ENCODE measurements at regions of chr15 and their contacts with region 1.

Region 1: GRCh38 chr15:89358755-89359439 is 24.3 kb upstream of the POLG start:
- DNase-seq: peak; percentile 94
- H3K4me3 ChIP-seq: peak overlapping the region; percentile 54 to 81
- H3K27ac ChIP-seq: peak overlapping the region in 1 of 2 experiments; percentile 77; a peak in 1 of 4 replicates
- H3K4me1 ChIP-seq: peaks cover 0 to 35% of the 10 kb centered on the region in 2 experiments; a peak in 2 of 4 replicates
- H3K27me3 ChIP-seq: peaks cover 39% of the 10 kb centered on the region; the same call in 1 of the 2 replicates
- CTCF ChIP-seq: peak; percentile 92
- EP300 ChIP-seq: no peak
- RAD21 ChIP-seq: peak; percentile 87

Region 2: GRCh38 chr15:89206908-89207331 is 152.0 kb before region 1 on chr15:
- CTCF ChIA-PET with region 1: interaction called, 13 read pairs
- POLR2A ChIA-PET with region 1: no interaction called
- DNase-seq: peak; percentile 93
- H3K4me3 ChIP-seq: peak overlapping the region; percentile 32 to 36; a peak in 3 of 4 replicates
- H3K27ac ChIP-seq: no peak overlapping the region
- H3K4me1 ChIP-seq: no peaks in the 10 kb centered on the region; a peak in 1 of 4 replicates
- H3K27me3 ChIP-seq: no peaks in the 10 kb centered on the region
- CTCF ChIP-seq: peak; percentile 96
- EP300 ChIP-seq: no peak
- RAD21 ChIP-seq: peak; percentile 85

Region 3: GRCh38 chr15:89329329-89330084 is 29.4 kb before region 1 on chr15:
- CTCF ChIA-PET with region 1: interaction called, 95 read pairs
- POLR2A ChIA-PET with region 1: interaction called, 6 read pairs
- DNase-seq: no peak
- H3K4me3 ChIP-seq: no peak overlapping the region
- H3K27ac ChIP-seq: peak overlapping the region in 1 of 2 experiments; percentile 11; a peak in 1 of 4 replicates
- H3K4me1 ChIP-seq: peaks cover 18 to 44% of the 10 kb centered on the region in 2 experiments
- H3K27me3 ChIP-seq: no peaks in the 10 kb centered on the region
- CTCF ChIP-seq: no peak
- EP300 ChIP-seq: no peak
- RAD21 ChIP-seq: no peak

Region 4: DNA sequence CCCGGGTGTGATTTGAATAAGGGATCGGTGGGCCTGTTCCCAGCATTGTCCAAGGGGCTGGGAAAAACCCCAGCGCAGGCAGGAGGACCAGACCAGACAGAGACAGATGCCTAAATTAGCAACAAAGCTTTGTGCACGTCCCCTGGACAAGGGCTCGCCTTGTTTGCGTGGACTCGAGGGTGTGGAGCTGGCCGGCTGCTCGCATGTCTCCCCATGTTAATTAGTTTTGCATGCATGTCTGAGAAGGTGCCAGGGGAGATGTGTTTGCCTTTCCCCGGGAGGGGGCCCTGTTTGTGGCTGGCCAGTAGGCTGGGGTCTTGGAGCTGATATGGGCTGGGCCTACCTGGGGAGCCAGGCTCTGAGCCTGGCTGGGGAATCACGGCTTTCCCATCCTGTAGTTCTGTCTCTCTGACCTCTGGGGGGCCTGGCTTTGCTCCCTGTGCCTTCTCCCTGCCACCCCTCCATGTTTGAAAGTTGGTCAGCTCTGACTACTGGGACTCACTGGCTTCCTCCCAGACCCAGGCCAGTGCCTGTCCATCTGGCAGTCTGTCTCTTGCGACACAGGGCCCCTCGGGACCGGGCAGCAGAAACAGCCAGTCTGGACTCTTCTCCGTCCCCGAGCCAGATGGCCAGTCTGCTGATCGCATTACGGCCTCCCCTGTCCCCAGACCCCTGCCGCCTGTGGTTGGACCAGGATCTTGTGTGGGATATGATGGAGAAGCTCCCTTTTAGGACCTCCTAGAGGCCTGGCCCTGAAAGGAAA is 31.1 kb after region 1 on chr15:
- CTCF ChIA-PET with region 1: interaction called, 766 read pairs
- POLR2A ChIA-PET with region 1: interaction called, 19 read pairs
- DNase-seq: peak; percentile 83
- H3K4me3 ChIP-seq: no peak overlapping the region
- H3K27ac ChIP-seq: peak overlapping the region in 1 of 2 experiments; percentile 98; a peak in 2 of 4 replicates
- H3K4me1 ChIP-seq: peaks cover 0 to 61% of the 10 kb centered on the region in 2 experiments; a peak in 2 of 4 replicates
- H3K27me3 ChIP-seq: no peaks in the 10 kb centered on the region
- CTCF ChIP-seq: no peak
- EP300 ChIP-seq: peak in 1 of 2 experiments; percentile 40; a peak in 2 of 4 replicates
- RAD21 ChIP-seq: no peak

Region 5: DNA sequence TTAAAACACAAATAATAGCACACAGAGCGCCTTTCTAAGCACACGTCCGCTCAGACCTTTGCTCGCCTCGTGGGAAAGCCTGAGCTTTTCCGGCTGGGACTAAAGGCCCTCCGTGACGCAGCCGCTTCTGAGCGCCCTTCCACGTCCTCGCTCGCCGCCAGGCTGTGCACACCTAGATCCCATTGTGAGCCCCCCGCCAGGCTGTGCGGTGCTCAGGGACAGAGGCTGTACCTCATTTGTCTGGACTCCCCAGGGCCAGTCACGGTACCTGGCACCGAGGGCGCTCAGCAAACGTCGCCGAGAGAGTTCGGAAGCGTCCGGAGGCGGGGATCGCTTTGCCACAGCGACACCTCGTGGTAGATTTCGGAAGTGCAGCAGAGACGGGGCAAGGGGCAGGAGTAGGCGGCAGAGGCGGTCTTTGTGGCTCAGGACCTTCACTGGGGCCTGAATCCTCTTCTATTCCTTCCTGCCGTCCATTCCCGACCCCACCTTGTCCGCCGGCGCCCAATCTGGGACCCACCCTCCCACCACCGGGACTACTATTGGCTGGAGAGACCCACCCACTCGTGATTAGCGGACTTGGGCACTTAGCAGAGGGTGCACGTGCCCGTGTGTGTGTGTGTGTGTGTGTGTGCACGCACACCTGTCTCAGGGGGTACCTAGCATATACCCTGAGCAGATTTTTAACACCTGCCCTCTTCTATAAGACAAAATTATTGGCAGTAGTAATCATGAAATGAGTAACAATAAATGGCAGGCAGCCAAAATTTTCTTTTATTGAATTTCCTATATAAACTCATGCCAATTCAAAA is 71.8 kb after region 1 on chr15:
- CTCF ChIA-PET with region 1: interaction called, 618 read pairs
- POLR2A ChIA-PET with region 1: interaction called, 3 read pairs
- DNase-seq: peak; percentile 94
- H3K4me3 ChIP-seq: peak overlapping the region in 1 of 2 experiments; percentile 40; a peak in 1 of 4 replicates
- H3K27ac ChIP-seq: no peak overlapping the region
- H3K4me1 ChIP-seq: peaks cover 6 to 8% of the 10 kb centered on the region in 2 experiments; a peak in 3 of 4 replicates
- H3K27me3 ChIP-seq: no peaks in the 10 kb centered on the region
- CTCF ChIP-seq: peak; percentile 86
- EP300 ChIP-seq: no peak
- RAD21 ChIP-seq: peak; percentile 87

Region 6: GRCh38 chr15:89462331-89462912 is 103.5 kb after region 1 on chr15:
- CTCF ChIA-PET with region 1: interaction called, 22 read pairs
- POLR2A ChIA-PET with region 1: no interaction called
- DNase-seq: no peak
- H3K4me3 ChIP-seq: no peak overlapping the region
- H3K27ac ChIP-seq: no peak overlapping the region
- H3K4me1 ChIP-seq: peaks cover 0 to 6% of the 10 kb centered on the region in 2 experiments; a peak in 1 of 4 replicates
- H3K27me3 ChIP-seq: no peaks in the 10 kb centered on the region
- CTCF ChIP-seq: no peak
- EP300 ChIP-seq: no peak
- RAD21 ChIP-seq: no peak

Region 7: DNA sequence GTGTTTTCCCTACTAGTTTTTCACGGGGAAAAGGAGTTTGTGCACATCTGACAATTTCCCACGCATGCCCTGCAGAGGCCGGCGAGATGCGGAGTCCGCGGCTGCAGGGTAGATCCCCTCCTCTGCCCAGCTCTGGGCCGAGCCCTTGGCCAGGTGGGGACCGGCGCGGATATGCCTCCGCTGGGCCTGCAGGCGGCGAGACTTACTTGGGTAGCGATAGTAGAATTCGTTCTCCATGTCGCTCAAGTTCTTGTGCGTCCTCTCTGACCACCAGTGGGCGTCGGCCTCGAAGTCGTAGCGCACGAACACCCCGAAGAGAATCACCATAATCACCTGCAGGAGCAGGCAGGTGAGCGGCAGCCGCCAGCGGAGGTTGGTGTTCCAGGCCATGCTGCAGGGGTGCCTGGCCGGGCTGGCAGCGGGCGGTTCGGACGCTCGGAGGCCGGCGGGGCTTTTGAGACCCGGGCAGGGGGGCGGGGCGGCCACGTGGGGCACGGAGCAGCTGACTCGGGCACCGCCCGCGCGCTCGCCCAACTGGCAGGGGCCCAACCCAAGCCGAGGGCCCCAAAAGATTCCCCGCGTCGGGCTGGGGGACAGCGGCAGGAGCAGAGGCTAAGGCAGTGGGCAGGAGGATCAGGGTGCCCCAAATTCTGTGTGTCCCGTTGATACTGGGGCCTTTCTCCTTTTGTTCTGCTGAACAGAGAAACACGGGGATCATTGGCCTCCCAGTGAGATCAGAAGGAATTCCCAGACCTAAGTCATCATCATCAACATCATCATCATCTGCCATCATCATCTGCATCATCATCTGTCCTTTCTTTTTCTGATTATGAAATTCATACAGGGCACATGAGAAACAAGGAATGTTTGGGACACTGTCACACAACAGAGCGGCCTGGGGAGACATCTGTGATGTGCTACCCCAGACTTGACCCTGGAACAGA is 137.5 kb after region 1 on chr15 and contains the start of gene RHCG:
- CTCF ChIA-PET with region 1: interaction called, 18 read pairs
- POLR2A ChIA-PET with region 1: no interaction called
- DNase-seq: peak; percentile 61
- H3K4me3 ChIP-seq: peak within 1 kb of the TSS; percentile 14 to 46; a peak in 2 of 4 replicates
- H3K27ac ChIP-seq: no peak within 1 kb of the TSS
- H3K4me1 ChIP-seq: peaks cover 0 to 8% of the 10 kb centered on the region in 2 experiments; a peak in 1 of 4 replicates
- H3K27me3 ChIP-seq: no peaks in the 10 kb centered on the region
- CTCF ChIP-seq: peak; percentile 15; the same call in 1 of the 2 replicates
- EP300 ChIP-seq: no peak
- RAD21 ChIP-seq: no peak
- polyA plus RNA-seq, gene RHCG: not detected in 2 replicates

Measured in SK-N-SH (cell line).